ENCODE measurements at regions of chr3 and their contacts with region 1.

Region 1: DNA sequence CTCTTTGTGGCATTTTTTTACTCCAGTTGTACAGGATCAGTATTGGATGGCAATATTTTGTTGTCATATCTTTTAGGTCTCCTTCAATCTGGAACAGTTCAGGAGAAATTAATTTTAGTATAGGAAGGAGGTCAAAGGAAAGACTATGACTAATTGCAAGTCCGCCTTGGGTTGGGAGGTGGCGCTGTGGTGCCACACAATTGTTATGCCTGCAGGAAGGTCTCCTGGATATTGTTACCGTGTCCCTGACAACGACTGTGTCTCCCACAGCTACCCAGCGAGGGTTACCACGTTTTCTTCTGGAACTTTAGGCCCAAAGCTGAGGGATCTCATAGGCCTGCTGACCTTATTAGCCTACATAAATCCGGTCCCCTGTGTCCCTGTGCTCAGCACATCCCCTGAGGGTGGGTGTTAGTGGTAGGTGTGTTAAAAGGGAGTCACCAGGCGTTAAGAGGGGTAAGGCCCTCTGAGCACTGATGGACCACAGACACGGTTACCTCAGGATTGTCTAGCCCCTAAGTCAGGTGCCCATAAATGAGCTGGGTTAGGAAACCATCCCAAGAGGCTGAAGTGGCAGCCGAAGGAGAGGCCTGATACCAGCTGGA is 31.5 kb downstream of the KCNAB1 start:
- DNase-seq: peak; percentile 85
- H3K4me3 ChIP-seq: no peak overlapping the region
- H3K27ac ChIP-seq: no peak overlapping the region
- H3K4me1 ChIP-seq: peaks cover 6% of the 10 kb centered on the region
- H3K27me3 ChIP-seq: no peaks in the 10 kb centered on the region
- CTCF ChIP-seq: peak; percentile 93

Region 2: GRCh38 chr3:156382458-156383346 is 230.8 kb after region 1 on chr3:
- CTCF ChIA-PET with region 1: interaction called, 12 read pairs
- POLR2A ChIA-PET with region 1: no interaction called
- intact Hi-C with region 1: loop called (anchors 2 kb)
- DNase-seq: peak; percentile 70
- H3K4me3 ChIP-seq: no peak overlapping the region
- H3K27ac ChIP-seq: no peak overlapping the region
- H3K4me1 ChIP-seq: no peaks in the 10 kb centered on the region
- H3K27me3 ChIP-seq: no peaks in the 10 kb centered on the region
- CTCF ChIP-seq: peak; percentile 82

Region 3: DNA sequence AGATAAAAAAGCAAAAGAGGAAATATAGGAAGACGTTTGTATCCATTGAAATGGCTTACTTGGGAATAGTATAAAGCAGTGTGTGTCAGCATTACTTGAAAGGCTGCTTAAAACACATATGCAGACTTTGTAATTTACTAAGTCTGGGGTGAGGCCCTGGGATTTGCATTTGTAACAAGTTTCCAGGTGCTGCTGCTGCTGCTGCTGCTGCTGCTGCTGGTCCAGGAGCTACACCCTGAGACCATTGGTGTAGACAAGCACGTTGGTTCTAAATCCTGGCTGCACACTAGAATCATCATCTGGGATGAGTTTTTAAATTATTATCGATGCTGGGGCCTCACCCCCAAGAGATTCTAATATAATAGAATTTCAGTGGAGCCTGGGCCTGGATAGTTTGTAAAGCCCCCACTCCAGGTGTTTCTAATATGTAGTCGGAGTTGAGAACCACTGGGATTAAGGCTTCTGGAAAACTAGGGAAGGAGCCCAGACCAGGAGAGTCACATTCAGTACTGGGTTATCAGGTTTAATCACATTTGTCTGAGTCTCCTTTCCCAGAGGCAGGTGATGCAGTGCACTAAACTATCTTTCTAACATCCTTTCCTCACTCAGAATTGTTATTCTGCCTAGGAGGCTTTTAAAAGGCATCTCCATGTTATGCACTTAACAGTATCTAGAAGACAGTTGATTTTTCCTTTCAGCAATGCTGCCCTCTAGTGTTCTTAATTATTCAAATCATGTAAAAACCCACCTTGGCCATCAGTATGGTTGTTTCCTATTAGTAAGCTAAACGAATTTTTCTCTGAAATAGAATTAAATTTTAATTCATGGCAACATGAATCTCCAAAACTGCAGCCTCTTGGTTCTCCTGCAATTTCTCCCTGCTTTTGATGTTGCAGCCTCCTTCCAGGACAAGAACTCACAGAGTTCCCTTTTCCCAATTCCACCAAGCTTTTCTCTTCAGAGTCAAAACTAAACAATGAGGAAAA is 357.6 kb after region 1 on chr3:
- CTCF ChIA-PET with region 1: interaction called, 8 read pairs
- POLR2A ChIA-PET with region 1: no interaction called
- intact Hi-C with region 1: loop called (anchors 2 kb)
- DNase-seq: peak; percentile 77
- H3K4me3 ChIP-seq: no peak overlapping the region
- H3K27ac ChIP-seq: no peak overlapping the region
- H3K4me1 ChIP-seq: peaks cover 6% of the 10 kb centered on the region
- H3K27me3 ChIP-seq: no peaks in the 10 kb centered on the region
- CTCF ChIP-seq: peak; percentile 78

Region 4: DNA sequence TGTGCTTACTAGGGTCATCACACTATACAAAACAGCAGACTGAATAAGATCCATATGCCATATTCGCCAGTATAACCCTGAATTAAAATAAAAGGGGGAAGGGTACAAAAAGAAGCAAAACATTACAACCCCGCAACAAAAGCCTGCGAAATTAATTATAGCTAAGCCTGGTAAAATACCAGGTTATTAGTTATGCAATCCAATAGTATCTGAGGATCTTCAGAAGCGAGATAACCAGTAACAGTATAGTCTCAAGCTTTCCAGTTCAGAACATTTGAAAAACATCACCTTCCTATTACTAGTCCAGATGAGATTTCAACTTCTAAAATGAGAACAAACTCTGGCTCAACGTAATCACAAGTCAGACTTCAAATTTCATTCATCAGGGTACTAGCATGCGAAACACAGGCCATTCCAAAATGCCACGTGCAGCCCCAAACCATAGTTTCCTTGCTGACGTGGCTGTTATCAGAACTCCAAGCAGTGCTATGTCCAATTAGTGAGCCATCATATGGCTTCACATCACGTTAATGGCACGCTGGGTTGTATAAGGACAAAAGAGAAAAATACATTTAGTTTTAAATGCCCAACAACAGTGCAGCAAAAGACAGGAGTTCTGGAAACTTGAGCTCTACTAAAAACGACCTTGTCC is 401.9 kb after region 1 on chr3:
- CTCF ChIA-PET with region 1: no interaction called
- POLR2A ChIA-PET with region 1: no interaction called
- intact Hi-C with region 1: no loop called
- DNase-seq: peak; percentile 61
- H3K4me3 ChIP-seq: peak overlapping the region; percentile 93
- H3K27ac ChIP-seq: peak overlapping the region; percentile 91
- H3K4me1 ChIP-seq: peaks cover 51% of the 10 kb centered on the region
- H3K27me3 ChIP-seq: no peaks in the 10 kb centered on the region
- CTCF ChIP-seq: no peak

Region 5: DNA sequence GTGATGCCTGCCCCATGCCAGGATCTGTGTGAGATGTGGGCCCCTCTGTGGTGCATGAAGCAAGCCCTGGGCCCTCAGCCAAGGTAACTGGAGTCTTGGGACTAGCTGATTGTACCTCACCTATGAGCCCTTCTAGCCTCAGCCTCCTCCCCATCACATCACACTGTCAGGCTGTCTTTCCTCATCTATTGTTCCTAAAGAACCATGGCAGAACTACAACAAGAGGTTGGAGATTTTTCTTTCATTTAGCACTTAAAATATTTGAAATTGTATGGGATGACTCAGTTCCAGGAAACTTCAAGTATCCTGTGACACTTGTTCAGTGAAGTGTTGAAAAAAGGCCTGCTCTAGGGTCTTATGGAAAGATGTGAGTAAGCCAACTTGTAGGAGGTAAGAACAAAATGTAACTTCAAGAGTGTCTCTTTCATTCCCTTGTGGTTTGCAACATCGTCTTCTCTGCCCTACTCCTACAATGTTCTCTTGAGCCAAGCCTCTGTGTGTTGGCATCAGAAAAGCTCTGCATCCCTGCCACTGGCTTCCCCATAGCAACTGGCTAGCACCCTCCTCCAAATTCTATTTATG is 463.8 kb after region 1 on chr3:
- CTCF ChIA-PET with region 1: no interaction called
- POLR2A ChIA-PET with region 1: no interaction called
- intact Hi-C with region 1: loop called (anchors 5 kb)
- DNase-seq: peak; percentile 82
- H3K4me3 ChIP-seq: no peak overlapping the region
- H3K27ac ChIP-seq: peak overlapping the region; percentile 99
- H3K4me1 ChIP-seq: peaks cover 72% of the 10 kb centered on the region
- H3K27me3 ChIP-seq: no peaks in the 10 kb centered on the region
- CTCF ChIP-seq: no peak

Region 6: DNA sequence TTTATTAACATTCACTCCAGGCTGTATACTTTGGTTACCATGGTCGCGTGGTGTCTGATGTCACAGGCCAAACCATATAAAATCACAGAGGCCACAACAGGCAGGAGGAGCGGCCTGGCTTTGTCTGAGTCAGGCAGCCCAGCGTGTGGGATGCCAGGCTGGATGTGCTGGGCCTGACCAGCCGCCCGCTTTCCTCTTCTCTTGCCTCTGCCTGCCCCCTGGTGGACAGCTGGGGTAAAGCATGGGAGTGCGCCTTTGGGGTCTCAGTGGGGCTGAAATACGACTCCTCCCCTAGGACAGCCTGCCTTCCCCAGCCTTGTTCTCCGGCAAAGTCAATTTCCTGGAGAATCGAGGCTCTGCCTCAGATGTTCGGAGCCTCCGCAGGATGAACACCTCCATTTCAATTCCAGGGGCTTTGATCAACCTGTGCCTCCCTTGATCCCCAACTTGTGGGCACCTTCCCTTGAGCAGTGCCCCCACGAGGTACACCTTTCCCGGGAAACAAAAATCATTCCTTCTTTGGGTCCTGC is 929.8 kb after region 1 on chr3:
- CTCF ChIA-PET with region 1: interaction called, 4 read pairs
- POLR2A ChIA-PET with region 1: no interaction called
- intact Hi-C with region 1: loop called (anchors 5 kb)
- DNase-seq: peak; percentile 97
- H3K4me3 ChIP-seq: no peak overlapping the region
- H3K27ac ChIP-seq: peak overlapping the region; percentile 62
- H3K4me1 ChIP-seq: peaks cover 45% of the 10 kb centered on the region
- H3K27me3 ChIP-seq: no peaks in the 10 kb centered on the region
- CTCF ChIP-seq: peak; percentile 97

Region 7: DNA sequence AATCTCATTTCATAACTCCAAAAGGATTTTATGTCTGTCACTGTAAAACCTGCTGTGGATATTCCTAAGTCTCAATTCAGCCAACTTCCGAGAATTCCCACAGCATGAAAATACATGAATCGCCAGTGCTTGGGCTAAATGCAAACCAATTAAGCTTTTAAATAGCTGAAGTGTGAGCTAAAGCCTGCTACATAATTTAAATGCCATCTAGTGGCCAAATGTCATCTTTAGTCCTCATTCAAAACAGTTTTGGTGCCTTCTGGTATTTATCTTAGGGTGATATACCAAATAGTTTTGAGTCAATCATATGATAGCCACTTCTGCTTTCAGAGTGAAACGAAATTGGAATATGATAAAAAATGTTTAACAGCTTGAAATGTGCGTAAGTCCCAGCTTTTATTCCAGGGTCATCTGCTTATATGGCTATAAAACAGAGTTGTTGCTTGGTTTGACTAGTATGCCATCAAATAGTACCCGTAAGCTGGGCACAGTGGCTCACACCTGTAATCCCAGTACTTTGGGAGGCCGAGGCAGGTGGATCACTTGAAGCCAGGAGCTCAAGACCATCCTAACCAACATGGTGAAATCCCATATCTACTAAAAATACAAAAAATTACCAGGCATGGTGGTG is 1049.8 kb after region 1 on chr3:
- CTCF ChIA-PET with region 1: interaction called, 6 read pairs
- POLR2A ChIA-PET with region 1: no interaction called
- intact Hi-C with region 1: loop called (anchors 5 kb)
- DNase-seq: peak; percentile 72
- H3K4me3 ChIP-seq: no peak overlapping the region
- H3K27ac ChIP-seq: no peak overlapping the region
- H3K4me1 ChIP-seq: peaks cover 6% of the 10 kb centered on the region
- H3K27me3 ChIP-seq: no peaks in the 10 kb centered on the region
- CTCF ChIP-seq: peak; percentile 69